ENCODE measurements at regions of chrX and their contacts with region 1.

Region 1: DNA sequence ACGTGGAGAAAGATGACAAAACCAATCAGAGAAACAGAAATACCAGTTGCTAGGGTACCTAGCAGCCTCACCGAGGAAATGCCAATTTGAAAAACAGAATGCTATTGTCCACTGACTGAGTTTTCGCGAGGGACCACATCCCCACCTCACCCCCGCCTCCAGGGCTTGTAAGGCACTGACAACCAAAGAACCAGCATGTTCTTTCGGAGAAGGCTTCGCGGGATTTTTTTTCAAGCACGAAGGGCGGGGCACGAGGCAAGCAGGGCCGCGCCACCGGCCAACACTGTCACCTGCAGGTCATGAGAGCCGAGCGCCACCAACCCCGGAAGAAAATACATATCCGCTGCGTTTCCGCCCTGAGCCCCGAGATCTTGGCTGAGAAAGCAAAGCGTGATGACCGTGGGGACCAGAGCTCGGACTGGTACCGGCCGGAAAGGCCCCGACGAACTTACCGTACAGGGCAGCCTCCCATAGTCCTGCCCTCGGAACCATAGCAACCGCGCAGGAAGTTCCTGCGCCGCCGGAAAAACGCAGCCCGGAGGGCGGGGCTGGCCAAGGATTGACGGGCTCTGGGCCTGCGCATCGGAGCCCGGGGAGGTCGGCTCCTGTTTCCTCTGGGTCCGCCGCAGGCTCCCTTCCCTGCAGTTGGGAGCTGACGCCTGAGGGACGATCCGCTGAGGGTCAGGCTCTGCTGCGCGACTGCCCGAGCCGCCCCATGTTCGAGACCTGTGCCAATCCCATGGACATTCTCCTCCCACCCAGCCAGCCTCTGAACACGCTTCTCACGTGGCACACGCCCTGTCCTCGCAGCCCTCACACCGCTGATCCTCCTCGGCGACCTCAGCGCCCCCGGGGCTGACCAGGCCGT is 59.2 kb upstream of the PAGE5 start:
- DNase-seq: peak; percentile 83
- H3K4me3 Mint-ChIP-seq: peak overlapping the region; percentile 83
- H3K27ac Mint-ChIP-seq: peak overlapping the region; percentile 90
- H3K4me1 Mint-ChIP-seq: peaks cover 6% of the 10 kb centered on the region
- H3K27me3 Mint-ChIP-seq: peaks cover 48% of the 10 kb centered on the region
- CTCF ChIP-seq: peak; percentile 6

Region 2: DNA sequence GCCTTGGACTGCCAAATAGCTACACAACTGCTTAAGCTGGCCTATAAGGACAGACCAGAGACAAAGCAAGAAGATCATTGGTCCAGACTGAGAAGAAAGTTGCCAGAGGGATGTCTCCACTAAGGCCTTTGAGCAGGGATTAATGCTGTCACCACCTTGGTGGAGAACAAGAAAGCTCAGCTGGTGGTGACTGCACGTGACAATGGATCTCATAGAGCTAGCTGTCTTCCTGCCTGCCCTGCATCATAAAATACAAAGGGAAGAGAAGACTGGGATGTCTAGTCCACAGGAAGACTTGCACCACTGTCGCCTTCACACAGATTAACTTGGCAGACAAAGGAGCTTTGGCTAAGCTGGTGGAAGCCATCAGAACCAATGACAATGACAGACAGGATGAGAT is 937.3 kb before region 1 on chrX:
- CTCF ChIA-PET with region 1: no interaction called
- POLR2A ChIA-PET with region 1: no interaction called
- intact Hi-C with region 1: no loop called
- DNase-seq: no peak
- H3K4me3 Mint-ChIP-seq: no peak overlapping the region
- H3K27ac Mint-ChIP-seq: no peak overlapping the region
- H3K4me1 Mint-ChIP-seq: no peaks in the 10 kb centered on the region
- H3K27me3 Mint-ChIP-seq: no peaks in the 10 kb centered on the region
- CTCF ChIP-seq: no peak

Region 3: DNA sequence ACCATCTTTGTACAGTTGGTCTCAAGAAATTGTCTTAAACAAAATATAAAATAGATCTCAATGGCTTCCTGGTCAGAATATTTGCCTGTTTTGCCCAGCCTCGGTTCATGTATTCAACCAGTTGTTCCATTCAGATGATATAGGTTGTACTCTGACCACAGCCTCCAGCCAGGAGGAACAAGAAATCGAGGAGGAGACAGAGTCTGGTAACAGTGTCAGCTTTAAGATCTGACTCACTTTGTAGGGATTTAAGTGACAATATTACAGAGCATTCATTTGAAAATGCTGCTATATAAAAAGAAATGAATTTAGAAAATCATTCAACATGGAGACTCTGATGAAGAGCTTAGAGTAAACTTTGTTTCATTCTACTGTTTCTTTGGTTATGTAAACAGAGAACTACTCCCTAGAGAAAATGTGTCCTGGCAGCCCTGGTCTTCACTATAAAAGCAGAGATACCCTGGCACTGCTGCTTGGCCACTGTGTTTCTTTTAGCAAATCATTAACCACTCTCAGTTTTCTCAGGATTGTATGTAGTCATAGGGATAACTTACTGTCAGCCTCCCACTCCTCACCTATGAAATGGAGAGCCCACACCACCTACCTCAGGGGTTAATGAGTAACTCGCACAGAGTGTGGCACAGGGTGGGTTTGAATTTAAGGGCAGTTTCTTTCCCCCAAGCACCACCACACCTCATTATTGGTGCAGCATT is 18.6 kb before region 1 on chrX:
- CTCF ChIA-PET with region 1: no interaction called
- POLR2A ChIA-PET with region 1: no interaction called
- intact Hi-C with region 1: no loop called
- DNase-seq: no peak
- H3K4me3 Mint-ChIP-seq: no peak overlapping the region
- H3K27ac Mint-ChIP-seq: no peak overlapping the region
- H3K4me1 Mint-ChIP-seq: no peaks in the 10 kb centered on the region
- H3K27me3 Mint-ChIP-seq: peaks cover 27% of the 10 kb centered on the region
- CTCF ChIP-seq: no peak

Region 4: DNA sequence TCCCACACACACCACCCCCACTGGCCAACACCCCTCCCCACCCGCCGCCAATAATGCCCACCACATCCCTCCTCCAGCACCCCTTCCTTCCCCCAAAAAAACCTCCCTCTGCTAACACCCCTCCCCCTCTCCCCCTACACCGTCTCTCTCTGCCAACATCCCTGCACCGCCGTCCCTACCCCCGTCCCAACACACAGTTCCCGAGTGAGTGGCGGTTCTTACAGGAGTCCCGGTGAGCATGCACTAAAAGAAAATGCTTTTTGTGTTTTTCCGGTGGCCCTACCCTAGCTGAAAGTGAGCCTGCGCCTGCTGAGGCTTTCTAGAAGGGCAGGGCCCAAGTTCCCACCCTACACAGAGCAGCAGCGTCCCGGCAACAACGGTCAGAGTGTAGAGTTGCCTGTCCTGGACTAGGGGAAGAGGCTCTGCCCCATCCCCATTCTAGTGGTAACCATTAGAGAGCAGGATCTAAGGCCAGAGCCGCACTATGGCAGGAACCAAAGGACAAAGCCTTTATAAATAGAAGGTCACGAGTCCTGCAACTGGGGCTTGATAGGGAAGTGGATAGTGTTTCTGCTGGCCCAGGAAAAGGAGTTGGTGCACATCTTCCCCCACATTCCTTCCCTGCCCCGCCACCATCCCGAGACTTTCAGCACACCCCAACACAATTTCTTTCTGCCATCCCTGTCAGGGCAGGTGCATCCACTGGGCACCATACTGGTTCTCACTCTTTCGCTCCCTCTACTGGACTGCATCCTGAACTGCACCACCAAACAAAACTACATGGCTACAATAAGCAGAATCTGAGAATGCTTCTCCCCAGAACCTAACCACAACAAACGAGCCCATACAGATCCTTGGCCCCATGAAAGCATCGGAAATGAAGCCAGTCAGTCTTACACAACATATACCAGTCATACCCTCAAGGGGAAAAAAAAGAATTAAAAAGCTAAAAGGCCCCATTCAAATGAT is 181.9 kb after region 1 on chrX:
- CTCF ChIA-PET with region 1: no interaction called
- POLR2A ChIA-PET with region 1: no interaction called
- intact Hi-C with region 1: loop called (anchors 1 kb)
- DNase-seq: peak; percentile 38
- H3K4me3 Mint-ChIP-seq: no peak overlapping the region
- H3K27ac Mint-ChIP-seq: no peak overlapping the region
- H3K4me1 Mint-ChIP-seq: no peaks in the 10 kb centered on the region
- H3K27me3 Mint-ChIP-seq: peaks cover 15% of the 10 kb centered on the region
- CTCF ChIP-seq: peak; percentile 47

Measured in MCF 10A (cell line).